A549 (cell line): ENCODE measurements at regions of chr1 and their contacts with region 1.

Region 1: GRCh38 chr1:231534703-231535159 is 6.3 kb downstream of the TSNAX start:
- DNase-seq: no peak
- ATAC-seq: no peak
- H3K4me3 ChIP-seq: no peak overlapping the region
- H3K27ac ChIP-seq: no peak overlapping the region
- H3K4me1 ChIP-seq: peaks cover 4% of the 10 kb centered on the region; the same call in 2 of the 3 replicates
- CTCF ChIP-seq: no peak
- EP300 ChIP-seq: no peak
- POLR2A ChIP-seq: no peak
- RAD21 ChIP-seq: no peak

Region 2: DNA sequence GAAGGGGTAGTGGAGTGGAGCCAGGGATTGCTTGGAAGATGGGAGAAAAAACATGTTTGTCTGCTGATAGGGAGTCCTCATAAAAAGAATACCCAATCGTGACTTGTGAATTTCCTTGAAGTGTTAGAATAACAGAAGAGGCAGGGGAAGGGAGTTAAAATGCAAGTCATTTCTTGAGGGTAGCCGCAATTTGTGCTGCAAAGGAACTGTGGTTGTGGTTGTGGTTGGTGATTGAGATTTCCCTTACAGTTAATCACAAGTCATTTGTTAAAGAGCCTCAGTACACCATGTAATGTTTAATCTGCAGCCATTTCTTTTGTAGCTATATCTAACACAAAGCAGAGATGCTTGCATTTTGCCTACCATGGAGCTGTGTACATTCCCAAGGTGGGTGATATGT is 74.1 kb before region 1 on chr1:
- CTCF ChIA-PET with region 1: no interaction called
- POLR2A ChIA-PET with region 1: no interaction called
- DNase-seq: no peak
- ATAC-seq: no peak
- H3K4me3 ChIP-seq: no peak overlapping the region
- H3K27ac ChIP-seq: no peak overlapping the region
- H3K4me1 ChIP-seq: no peaks in the 10 kb centered on the region
- CTCF ChIP-seq: no peak
- EP300 ChIP-seq: no peak
- POLR2A ChIP-seq: no peak
- RAD21 ChIP-seq: no peak

Region 3: DNA sequence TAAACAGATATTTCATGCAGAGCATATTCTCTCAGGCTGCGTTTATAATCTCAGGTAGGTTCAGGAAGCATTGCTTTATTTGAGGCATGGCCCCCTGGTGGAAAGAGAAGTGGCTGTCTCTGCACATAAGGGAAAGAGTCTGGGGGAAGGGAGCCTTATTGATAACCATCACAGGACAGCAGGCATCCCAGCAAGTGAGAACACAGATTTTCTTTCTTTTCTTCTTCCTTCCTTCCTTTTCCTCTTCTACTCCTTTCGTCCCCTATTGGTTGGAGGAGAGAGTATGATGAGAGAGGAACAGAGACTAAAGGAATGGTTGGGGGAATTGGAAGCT is 15.7 kb after region 1 on chr1:
- CTCF ChIA-PET with region 1: interaction called, 14 read pairs
- POLR2A ChIA-PET with region 1: interaction called, 4 read pairs
- DNase-seq: peak; percentile 43 to 57
- ATAC-seq: peak; percentile 81 to 93
- H3K4me3 ChIP-seq: no peak overlapping the region
- H3K27ac ChIP-seq: no peak overlapping the region
- H3K4me1 ChIP-seq: 0 out of 3 replicates have a peak, but pooled peaks cover 6% of the 10 kb centered on the region
- CTCF ChIP-seq: peak; percentile 49
- EP300 ChIP-seq: no peak
- POLR2A ChIP-seq: no peak
- RAD21 ChIP-seq: peak; percentile 21 to 40; a peak in 2 of 5 replicates

Region 4: GRCh38 chr1:232016616-232017015 is 481.9 kb after region 1 on chr1:
- CTCF ChIA-PET with region 1: no interaction called
- POLR2A ChIA-PET with region 1: no interaction called
- DNase-seq: no peak
- ATAC-seq: no peak
- H3K4me3 ChIP-seq: no peak overlapping the region
- H3K27ac ChIP-seq: no peak overlapping the region
- H3K4me1 ChIP-seq: no peaks in the 10 kb centered on the region
- CTCF ChIP-seq: no peak
- EP300 ChIP-seq: no peak
- POLR2A ChIP-seq: no peak
- RAD21 ChIP-seq: no peak